Heart left ventricle (tissue), 16 donors: ENCODE measurements at regions of chr5 and their contacts with region 1.

Region 1: DNA sequence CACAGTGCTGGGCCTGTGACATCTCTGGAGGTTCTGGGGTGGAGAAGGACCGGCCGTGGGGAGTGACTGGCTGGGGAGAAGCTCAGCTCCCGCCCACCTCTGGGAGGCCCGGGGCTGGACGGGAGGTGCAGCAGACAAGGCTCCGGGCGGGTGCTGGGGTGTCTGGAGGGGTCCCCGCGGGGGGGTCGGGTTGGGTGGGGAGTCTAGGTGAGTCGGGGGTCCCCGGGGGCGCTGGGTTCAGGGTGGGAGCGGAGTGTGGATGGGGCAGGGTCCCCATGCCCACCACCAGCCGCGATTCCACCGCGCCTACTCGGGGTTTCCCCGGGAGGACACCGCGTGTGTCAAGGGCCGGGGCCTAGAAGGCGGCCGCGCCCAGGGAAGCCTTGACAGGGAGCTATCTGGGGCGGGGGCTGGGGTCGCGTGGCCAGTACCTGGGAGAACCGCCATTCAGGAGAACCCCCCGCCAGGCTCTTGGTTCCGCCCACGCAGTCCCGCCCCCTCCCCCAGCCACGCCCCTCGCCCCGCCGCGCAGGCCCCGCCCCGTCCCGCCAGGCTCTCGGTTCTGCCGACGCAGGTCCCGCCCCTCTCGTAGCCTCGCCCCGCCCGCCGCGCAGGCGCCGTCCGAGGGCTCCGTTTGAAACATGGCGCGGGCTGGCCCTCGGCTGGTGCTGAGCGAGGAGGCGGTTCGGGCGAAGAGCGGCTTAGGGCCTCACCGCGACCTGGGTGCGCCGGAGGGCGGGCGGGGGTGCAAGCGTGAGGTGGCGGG is at the start of gene CEP72:
- DNase-seq: peak; percentile 91 to 97 (median 92)
- ATAC-seq: peak; percentile 93 to 99 (median 98)
- H3K4me3 ChIP-seq: peak within 1 kb of the TSS; percentile 57 to 92 (median 82)
- H3K27ac ChIP-seq: peak within 1 kb of the TSS in 5 of 12 donors; percentile 21 to 57 (median 38)
- H3K4me1 ChIP-seq: peaks cover 0 to 16% (median 5%) of the 10 kb centered on the region in 12 donors
- H3K27me3 ChIP-seq: peaks cover 0 to 13% (median 0%) of the 10 kb centered on the region in 9 donors
- CTCF ChIP-seq: no peak
- POLR2A ChIP-seq: no peak
- total RNA-seq, gene CEP72: 0.58 to 4.1 (median 1.5) TPM

Region 2: DNA sequence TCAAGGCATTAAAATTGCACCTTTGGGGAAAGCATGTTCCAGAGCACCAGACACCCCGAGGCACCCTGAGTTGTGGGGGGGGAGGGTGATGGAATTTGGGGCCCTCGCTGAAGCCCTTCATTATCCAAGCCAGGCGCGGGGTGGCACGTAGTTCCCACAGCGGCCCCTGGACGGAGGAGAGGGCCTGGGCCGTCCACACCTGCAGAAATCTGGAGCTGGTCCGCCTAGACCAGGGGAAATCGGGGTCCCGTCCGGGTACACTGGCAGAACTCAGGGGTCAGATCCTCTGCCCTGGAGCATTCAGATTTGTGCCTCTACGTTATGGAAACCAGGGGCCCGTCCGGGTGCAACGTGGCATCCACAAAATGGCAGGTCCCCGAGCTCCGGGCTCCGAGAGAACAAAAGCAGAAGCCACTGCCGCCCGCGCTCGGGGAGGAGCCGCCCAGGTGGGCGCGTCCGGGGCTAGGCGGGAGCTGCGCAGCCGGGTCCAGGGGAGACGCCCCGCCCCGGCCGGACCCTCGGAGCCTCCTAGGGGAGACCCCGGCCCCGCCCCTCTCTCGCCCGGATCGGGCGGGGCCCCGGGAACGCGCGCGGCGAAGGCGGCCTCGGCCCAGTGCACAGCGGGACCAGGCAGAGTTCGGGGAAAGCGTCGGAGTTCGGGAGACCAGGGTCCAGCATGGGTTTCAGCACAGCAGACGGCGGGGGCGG is 520.2 kb before region 1 on chr5 and contains the start of gene PLEKHG4B:
- intact Hi-C with region 1: no loop called
- DNase-seq: peak in 1 of 5 donors; percentile 43
- ATAC-seq: no peak
- H3K4me3 ChIP-seq: peak within 1 kb of the TSS in 9 of 12 donors; percentile 21 to 47 (median 41)
- H3K27ac ChIP-seq: no peak within 1 kb of the TSS
- H3K4me1 ChIP-seq: peaks cover 0 to 9% (median 0%) of the 10 kb centered on the region in 12 donors
- H3K27me3 ChIP-seq: peaks cover 20 to 78% (median 46%) of the 10 kb centered on the region in 9 donors
- CTCF ChIP-seq: no peak
- POLR2A ChIP-seq: no peak
- total RNA-seq, gene PLEKHG4B: 0.03 to 0.34 (median 0.10) TPM in 4 of 9 donors, not detected in the others

Region 3: GRCh38 chr5:472656-473553 is 139.0 kb before region 1 on chr5:
- intact Hi-C with region 1: loop called in 1 of 10 experiments (anchors 10 kb)
- DNase-seq: peak; percentile 89 to 95 (median 91)
- ATAC-seq: peak; percentile 66 to 88 (median 86)
- H3K4me3 ChIP-seq: peak overlapping the region; percentile 86 to 99 (median 92)
- H3K27ac ChIP-seq: peak overlapping the region; percentile 53 to 92 (median 80)
- H3K4me1 ChIP-seq: peaks cover 3 to 40% (median 18%) of the 10 kb centered on the region in 12 donors
- H3K27me3 ChIP-seq: peaks cover 0 to 33% (median 24%) of the 10 kb centered on the region in 9 donors
- CTCF ChIP-seq: peak in 1 of 12 donors; percentile 54
- POLR2A ChIP-seq: peak in 1 of 2 donors; percentile 91